ENCODE measurements at regions of chr11 and their contacts with region 1.

Region 1: GRCh38 chr11:5808500-5809121 is at the start of gene OR52N2:
- DNase-seq: peak; percentile 75
- H3K4me3 ChIP-seq: peak within 1 kb of the TSS; percentile 39
- H3K27ac ChIP-seq: no peak within 1 kb of the TSS
- H3K4me1 ChIP-seq: no peaks in the 10 kb centered on the region
- H3K27me3 ChIP-seq: no peaks in the 10 kb centered on the region
- CTCF ChIP-seq: peak; percentile 69
- total RNA-seq, gene OR52N2: not detected

Region 2: DNA sequence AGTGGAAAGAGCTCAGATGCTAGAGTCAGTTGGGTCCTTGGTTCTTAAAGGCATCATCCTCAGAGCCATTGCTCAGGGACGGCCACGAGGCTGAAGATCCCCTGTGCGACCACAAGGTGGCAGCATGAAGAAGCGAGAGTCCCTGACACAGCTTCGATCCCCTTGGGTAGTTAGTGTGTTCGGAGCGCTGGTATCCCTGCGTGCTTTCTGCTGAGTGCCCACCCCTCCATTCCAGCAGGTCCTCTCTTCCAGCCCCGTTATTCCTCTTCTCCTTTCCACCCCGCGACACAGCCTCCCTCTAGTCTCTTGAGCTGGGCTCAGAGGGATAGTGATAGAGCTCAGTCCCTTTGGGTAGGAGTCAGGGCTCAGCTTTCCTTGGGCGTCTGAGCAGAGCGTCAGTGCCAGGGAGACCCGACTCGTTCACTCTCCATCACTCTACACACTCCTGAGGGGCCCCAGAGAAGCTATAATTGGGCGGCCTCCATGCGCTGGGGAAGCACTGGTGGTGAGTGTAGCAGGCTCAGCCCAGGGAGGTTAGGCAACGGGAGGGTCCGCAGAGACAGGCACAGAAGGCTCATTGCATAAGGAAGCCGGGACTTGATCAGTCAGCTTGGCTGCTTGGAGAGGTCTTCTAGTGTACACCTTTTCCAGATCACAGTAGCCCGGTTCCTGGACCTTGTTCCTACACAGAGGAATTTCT is 1171.5 kb before region 1 on chr11 and contains the start of gene OR51D1:
- intact Hi-C with region 1: loop called (anchors 10 kb)
- DNase-seq: peak; percentile 65
- H3K4me3 ChIP-seq: no peak within 1 kb of the TSS
- H3K27ac ChIP-seq: no peak within 1 kb of the TSS
- H3K4me1 ChIP-seq: no peaks in the 10 kb centered on the region
- H3K27me3 ChIP-seq: no peaks in the 10 kb centered on the region
- CTCF ChIP-seq: peak; percentile 87
- total RNA-seq, gene OR51D1: not detected

Region 3: GRCh38 chr11:5129457-5129877 is 679.1 kb before region 1 on chr11:
- intact Hi-C with region 1: loop called (anchors 5 kb)
- DNase-seq: no peak
- H3K4me3 ChIP-seq: no peak overlapping the region
- H3K27ac ChIP-seq: no peak overlapping the region
- H3K4me1 ChIP-seq: no peaks in the 10 kb centered on the region
- H3K27me3 ChIP-seq: no peaks in the 10 kb centered on the region
- CTCF ChIP-seq: no peak

Region 4: GRCh38 chr11:5476184-5476819 is 332.3 kb before region 1 on chr11:
- intact Hi-C with region 1: loop called (anchors 2 kb)
- DNase-seq: peak; percentile 34
- H3K4me3 ChIP-seq: no peak overlapping the region
- H3K27ac ChIP-seq: no peak overlapping the region
- H3K4me1 ChIP-seq: no peaks in the 10 kb centered on the region
- H3K27me3 ChIP-seq: no peaks in the 10 kb centered on the region
- CTCF ChIP-seq: peak; percentile 62

Region 5: DNA sequence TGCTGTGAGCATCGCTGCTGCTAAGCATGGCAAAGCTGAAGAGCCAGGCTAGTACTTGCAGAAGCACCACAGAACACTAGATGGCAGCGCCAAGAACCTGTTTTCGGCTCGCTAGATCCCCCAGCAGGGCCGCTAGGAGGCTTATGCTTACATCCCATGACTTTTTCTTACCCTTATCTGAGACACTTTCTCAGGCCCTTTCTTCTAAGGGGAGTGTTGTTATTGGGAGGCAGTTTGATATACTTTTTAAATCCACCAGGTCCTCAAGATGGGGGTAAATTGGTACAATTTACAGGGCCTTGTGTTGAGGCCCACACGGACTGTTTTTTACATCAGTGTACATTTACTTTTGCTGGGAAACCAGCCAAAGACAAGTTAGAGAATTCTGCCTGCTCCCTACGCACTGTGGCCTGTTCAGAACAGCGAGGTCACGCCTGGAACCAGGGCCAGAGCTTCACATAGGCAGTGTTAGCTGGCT is 208.2 kb before region 1 on chr11:
- intact Hi-C with region 1: loop called (anchors 2 kb)
- DNase-seq: peak; percentile 63
- H3K4me3 ChIP-seq: no peak overlapping the region
- H3K27ac ChIP-seq: no peak overlapping the region
- H3K4me1 ChIP-seq: no peaks in the 10 kb centered on the region
- H3K27me3 ChIP-seq: no peaks in the 10 kb centered on the region
- CTCF ChIP-seq: peak; percentile 79

Region 6: DNA sequence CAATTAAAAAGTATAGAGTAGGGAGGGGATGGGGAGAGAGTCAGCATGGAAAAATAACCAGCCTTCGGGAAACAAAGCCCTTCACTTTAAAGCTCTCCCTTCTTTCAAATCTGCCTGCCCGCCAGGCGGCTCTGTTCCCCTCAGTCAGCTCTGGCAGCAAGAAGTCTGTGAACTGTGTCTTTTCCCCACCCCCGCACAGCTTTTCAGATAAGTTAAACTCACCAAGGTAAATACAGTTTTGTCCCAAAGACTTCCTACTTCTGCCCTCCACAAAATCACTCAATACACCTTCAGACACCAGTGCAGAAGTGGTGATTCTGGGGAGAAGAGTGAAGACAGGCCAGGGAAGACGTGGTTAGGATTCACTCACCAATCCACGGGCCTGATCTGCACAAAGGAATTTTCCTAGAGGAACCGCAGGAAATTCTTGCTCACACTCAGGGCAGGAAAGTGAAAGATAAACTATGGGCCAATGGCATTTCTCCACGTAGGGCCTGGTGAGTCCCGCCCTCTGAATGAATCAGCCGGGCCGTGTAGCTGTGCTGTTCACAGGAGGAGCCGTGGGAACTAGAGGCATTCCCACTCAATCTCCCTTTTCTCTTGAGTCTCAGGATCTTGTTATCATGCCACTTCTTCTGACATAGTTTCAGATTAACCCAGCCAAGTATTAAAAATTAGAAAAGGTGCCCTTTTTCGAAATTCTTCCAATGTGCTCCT is 123.8 kb before region 1 on chr11 and contains the start of gene TRIM5:
- intact Hi-C with region 1: loop called (anchors 5 kb)
- DNase-seq: peak; percentile 91
- H3K4me3 ChIP-seq: peak within 1 kb of the TSS; percentile 40
- H3K27ac ChIP-seq: peak within 1 kb of the TSS; percentile 94
- H3K4me1 ChIP-seq: no peaks in the 10 kb centered on the region
- H3K27me3 ChIP-seq: no peaks in the 10 kb centered on the region
- CTCF ChIP-seq: peak; percentile 48
- total RNA-seq, gene TRIM5: 21.4 to 23.3 TPM